A673 (cell line): ENCODE measurements at regions of chr22 and their contacts with region 1.

Region 1: GRCh38 chr22:41403532-41404318 is 22.0 kb downstream of the TEF start:
- DNase-seq: peak; percentile 87
- H3K4me3 ChIP-seq: no peak overlapping the region
- H3K27ac ChIP-seq: no peak overlapping the region
- H3K4me1 ChIP-seq: peaks cover 22% of the 10 kb centered on the region
- H3K27me3 ChIP-seq: no peaks in the 10 kb centered on the region
- CTCF ChIP-seq: peak; percentile 98

Region 2: DNA sequence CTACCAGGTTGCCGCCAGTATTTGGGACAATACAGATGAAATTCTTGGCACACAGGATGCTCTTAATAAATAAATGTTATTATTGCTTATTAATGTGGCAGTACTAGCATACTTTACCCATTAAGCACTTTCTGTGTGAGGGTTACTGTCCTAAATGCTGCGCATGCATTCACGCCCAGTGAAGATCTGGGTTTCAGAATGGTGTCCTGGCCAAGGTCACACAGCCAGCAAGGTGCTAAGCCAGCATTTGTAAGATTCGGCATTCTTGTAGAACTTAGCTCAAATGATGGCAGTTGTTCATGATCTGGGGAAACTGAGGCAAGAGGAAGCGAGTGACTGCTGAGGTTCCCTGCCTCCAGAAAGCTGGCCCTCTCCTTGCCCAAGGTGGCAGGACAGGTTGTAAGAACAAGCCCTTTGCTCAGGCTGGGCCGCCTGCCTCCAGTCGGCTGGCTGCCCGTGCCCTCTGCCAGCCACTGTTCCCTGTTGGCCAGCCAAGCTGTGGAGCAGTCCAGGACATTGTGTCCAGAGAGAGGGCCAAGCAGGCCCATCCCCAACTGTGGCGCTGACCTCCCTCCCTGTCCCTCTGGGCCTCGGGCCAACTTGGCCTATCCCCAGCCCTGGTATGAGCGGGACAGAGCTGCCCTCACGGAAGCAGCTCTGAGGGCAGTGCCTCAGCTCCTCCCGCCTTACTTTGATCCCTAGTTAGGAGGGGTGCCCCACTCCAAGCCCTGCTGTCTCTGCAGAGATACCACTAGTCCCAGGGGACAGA is 14.1 kb after region 1 on chr22:
- CTCF ChIA-PET with region 1: no interaction called
- POLR2A ChIA-PET with region 1: no interaction called
- intact Hi-C with region 1: no loop called
- DNase-seq: no peak
- H3K4me3 ChIP-seq: no peak overlapping the region
- H3K27ac ChIP-seq: no peak overlapping the region
- H3K4me1 ChIP-seq: peaks cover 10% of the 10 kb centered on the region
- H3K27me3 ChIP-seq: no peaks in the 10 kb centered on the region
- CTCF ChIP-seq: no peak

Region 3: DNA sequence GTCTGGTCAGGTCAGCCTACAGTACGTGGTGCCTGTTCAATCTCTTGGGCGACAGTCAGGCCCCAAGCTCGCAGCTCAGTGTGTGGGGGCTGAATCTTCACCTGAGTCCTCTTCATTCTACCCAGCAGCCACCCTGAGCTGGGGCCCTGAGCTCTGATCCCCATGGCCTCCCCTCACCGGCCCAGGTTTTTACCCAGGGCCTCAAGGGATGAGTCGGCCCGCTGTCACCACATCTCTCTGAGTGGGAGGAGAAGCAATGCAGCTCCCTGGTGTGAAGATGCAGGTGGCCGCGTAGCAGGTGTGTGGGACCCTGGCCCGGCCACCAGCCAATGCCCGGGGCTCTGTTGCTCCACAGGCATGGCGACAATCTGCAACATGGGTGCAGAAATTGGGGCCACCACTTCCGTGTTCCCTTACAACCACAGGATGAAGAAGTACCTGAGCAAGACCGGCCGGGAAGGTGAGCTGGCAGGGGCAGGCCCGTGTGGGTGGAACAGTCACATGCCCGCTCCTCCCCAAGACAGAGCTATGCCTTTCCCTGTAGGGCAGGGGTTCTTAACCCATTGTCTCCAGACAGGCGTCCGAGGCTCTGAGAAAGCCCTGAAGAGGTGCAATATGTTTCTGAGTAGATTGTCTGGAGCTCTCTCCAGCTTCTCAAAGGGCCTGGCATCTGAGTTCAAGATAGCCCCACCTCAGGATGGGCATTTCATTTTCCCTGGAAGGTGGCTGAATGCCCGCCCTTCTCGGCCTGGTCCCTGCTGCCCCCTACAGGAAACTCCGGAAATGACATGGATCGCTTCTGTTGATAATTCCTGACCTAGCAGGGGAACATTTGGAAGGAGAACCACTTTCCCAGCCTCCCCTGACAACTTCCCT is 113.7 kb after region 1 on chr22:
- CTCF ChIA-PET with region 1: interaction called, 17 read pairs
- POLR2A ChIA-PET with region 1: no interaction called
- intact Hi-C with region 1: loop called (anchors 1 kb)
- DNase-seq: peak; percentile 74
- H3K4me3 ChIP-seq: no peak overlapping the region
- H3K27ac ChIP-seq: no peak overlapping the region
- H3K4me1 ChIP-seq: peaks cover 11% of the 10 kb centered on the region
- H3K27me3 ChIP-seq: no peaks in the 10 kb centered on the region
- CTCF ChIP-seq: peak; percentile 91

Region 4: GRCh38 chr22:41532908-41533825 is 129.4 kb after region 1 on chr22:
- CTCF ChIA-PET with region 1: no interaction called
- POLR2A ChIA-PET with region 1: no interaction called
- intact Hi-C with region 1: loop called (anchors 5 kb)
- DNase-seq: peak; percentile 66
- H3K4me3 ChIP-seq: no peak overlapping the region
- H3K27ac ChIP-seq: no peak overlapping the region
- H3K4me1 ChIP-seq: no peaks in the 10 kb centered on the region
- H3K27me3 ChIP-seq: no peaks in the 10 kb centered on the region
- CTCF ChIP-seq: peak; percentile 86

Region 5: DNA sequence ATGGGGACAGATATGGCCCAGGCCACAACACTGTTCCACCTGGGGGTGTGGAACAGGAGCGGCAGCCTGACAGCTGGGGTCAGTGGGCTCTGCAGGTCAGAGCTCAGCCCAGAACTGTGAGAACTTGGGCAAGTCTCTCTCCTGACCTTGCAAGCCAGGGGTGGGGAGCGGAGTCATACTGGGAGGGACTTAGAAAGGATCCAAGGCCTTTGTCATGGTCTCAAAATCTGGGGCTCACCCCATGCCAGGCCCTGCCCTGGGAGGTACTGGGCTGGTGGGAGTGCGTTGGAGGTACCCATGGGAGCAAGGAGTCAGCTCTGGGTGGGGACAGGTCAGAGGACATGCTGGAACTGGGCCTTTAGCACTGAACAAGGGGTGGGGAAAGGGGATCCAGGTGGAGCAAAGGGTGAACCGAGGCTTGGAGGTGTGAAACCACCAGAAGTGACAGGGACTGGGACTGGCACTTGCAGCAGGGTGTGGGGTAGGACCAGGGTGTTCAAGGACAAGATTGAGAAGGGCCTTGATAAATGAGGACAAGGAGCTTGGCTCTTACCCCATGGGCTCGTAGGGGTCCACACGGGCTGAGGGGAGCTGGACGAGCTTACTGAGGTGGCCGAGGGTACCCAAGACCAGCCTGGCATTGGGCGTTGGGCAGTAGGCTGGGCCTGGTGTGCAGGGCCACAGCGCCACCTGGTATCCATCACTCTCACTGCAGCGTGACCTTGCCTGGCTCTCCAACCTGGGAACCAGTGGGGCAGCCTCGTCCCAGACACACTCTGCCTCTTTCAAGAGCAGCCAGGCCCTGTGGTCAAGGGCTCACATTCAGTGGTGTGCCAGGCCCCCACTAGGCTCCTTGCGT is 193.3 kb after region 1 on chr22:
- CTCF ChIA-PET with region 1: no interaction called
- POLR2A ChIA-PET with region 1: no interaction called
- intact Hi-C with region 1: loop called (anchors 5 kb)
- DNase-seq: peak; percentile 49
- H3K4me3 ChIP-seq: no peak overlapping the region
- H3K27ac ChIP-seq: peak overlapping the region; percentile 29
- H3K4me1 ChIP-seq: no peaks in the 10 kb centered on the region
- H3K27me3 ChIP-seq: no peaks in the 10 kb centered on the region
- CTCF ChIP-seq: peak; percentile 91